ENCODE measurements at regions of chrX and their contacts with region 1.

Region 1: DNA sequence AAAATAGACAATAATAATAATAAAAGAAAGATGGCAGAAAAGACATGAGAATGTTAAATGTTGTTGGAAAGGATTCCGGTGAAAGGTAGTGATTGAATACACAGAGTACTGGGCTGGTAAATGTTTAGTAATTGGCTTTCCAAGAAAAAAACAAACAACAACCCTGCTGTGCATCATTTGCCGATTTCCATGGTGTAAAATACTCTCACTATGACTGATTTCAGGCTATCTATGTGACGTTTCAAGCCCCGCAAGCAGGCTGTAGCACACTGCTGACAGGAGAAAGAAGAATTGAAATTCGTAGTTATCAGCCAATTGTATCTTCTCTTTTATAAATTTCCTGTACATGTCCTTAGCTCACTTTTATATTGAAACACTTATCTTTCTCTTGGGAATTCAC is 13.6 kb upstream of the SEPTIN6 start:
- DNase-seq: no peak
- ATAC-seq: no peak
- H3K4me3 ChIP-seq: no peak overlapping the region
- H3K27ac ChIP-seq: no peak overlapping the region
- H3K4me1 ChIP-seq: no peaks in the 10 kb centered on the region; a peak in 1 of 5 replicates
- H3K27me3 ChIP-seq: no peaks in the 10 kb centered on the region
- CTCF ChIP-seq: no peak
- EP300 ChIP-seq: no peak
- POLR2A ChIP-seq: no peak
- RAD21 ChIP-seq: no peak

Region 2: DNA sequence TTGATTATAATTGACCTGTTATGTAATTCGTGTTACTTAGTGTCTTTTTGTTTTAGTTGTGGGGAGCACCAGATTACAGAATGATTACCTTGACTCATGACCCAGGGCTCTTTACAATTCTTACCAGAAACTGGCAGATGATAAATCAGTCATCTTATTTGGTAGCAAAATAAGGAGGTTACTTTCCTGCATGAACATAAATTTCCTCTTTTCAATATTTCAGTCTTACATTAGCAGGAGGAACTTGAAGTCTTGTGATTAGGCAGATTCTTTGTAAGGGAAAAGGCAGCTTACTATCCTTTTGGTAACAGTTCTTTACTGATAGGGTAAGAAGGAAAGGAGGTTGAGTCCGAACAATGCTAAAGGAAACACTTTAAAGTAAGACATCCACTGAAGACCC is 264.3 kb before region 1 on chrX:
- CTCF ChIA-PET with region 1: no interaction called
- POLR2A ChIA-PET with region 1: no interaction called
- in situ Hi-C with region 1: no loop called
- intact Hi-C with region 1: no loop called
- DNase-seq: no peak
- ATAC-seq: no peak
- H3K4me3 ChIP-seq: no peak overlapping the region
- H3K27ac ChIP-seq: no peak overlapping the region
- H3K4me1 ChIP-seq: no peaks in the 10 kb centered on the region
- H3K27me3 ChIP-seq: no peaks in the 10 kb centered on the region
- CTCF ChIP-seq: no peak
- EP300 ChIP-seq: no peak
- POLR2A ChIP-seq: no peak
- RAD21 ChIP-seq: no peak

Region 3: GRCh38 chrX:119602531-119603255 is 103.9 kb before region 1 on chrX:
- CTCF ChIA-PET with region 1: no interaction called
- POLR2A ChIA-PET with region 1: no interaction called
- in situ Hi-C with region 1: no loop called
- intact Hi-C with region 1: no loop called
- DNase-seq: no peak
- ATAC-seq: no peak
- H3K4me3 ChIP-seq: no peak overlapping the region
- H3K27ac ChIP-seq: no peak overlapping the region
- H3K4me1 ChIP-seq: peaks cover 7 to 12% of the 10 kb centered on the region in 2 experiments; a peak in 4 of 5 replicates
- H3K27me3 ChIP-seq: no peaks in the 10 kb centered on the region
- CTCF ChIP-seq: no peak
- EP300 ChIP-seq: no peak
- POLR2A ChIP-seq: no peak
- RAD21 ChIP-seq: no peak

Region 4: GRCh38 chrX:119693040-119693995 is 13.3 kb before region 1 on chrX and contains the start of gene SEPTIN6:
- CTCF ChIA-PET with region 1: interaction called, 3 read pairs
- POLR2A ChIA-PET with region 1: interaction called, 10 read pairs
- in situ Hi-C with region 1: no loop called
- intact Hi-C with region 1: no loop called
- DNase-seq: peak; percentile 79 to 88 (median 84)
- ATAC-seq: peak; percentile 83
- H3K4me3 ChIP-seq: peak within 1 kb of the TSS; percentile 91
- H3K27ac ChIP-seq: peak within 1 kb of the TSS; percentile 90
- H3K4me1 ChIP-seq: peaks cover 13 to 22% of the 10 kb centered on the region in 2 experiments
- H3K27me3 ChIP-seq: no peaks in the 10 kb centered on the region
- CTCF ChIP-seq: 0 out of 6 replicates have a peak, but pooled peaks of 1 of the 3 experiments have one; percentile 4
- EP300 ChIP-seq: no peak
- POLR2A ChIP-seq: peak; percentile 80
- RAD21 ChIP-seq: no peak
- polyA plus RNA-seq, gene SEPTIN6: 8.4 to 12.2 TPM

Region 5: GRCh38 chrX:119752751-119753400 is 46.3 kb after region 1 on chrX:
- CTCF ChIA-PET with region 1: no interaction called
- POLR2A ChIA-PET with region 1: no interaction called
- in situ Hi-C with region 1: no loop called
- intact Hi-C with region 1: no loop called
- DNase-seq: no peak
- ATAC-seq: no peak
- H3K4me3 ChIP-seq: no peak overlapping the region
- H3K27ac ChIP-seq: no peak overlapping the region
- H3K4me1 ChIP-seq: peaks cover 0 to 4% of the 10 kb centered on the region in 2 experiments; a peak in 2 of 5 replicates
- H3K27me3 ChIP-seq: no peaks in the 10 kb centered on the region
- CTCF ChIP-seq: no peak
- EP300 ChIP-seq: no peak
- POLR2A ChIP-seq: no peak
- RAD21 ChIP-seq: no peak

Measured in K562 (cell line).